ENCODE measurements at regions of chr16 and their contacts with region 1.

Region 1: GRCh38 chr16:15643048-15643945 is at the start of gene MARF1:
- DNase-seq: peak; percentile 99
- ATAC-seq: peak; percentile 74
- H3K4me3 Mint-ChIP-seq: peak within 1 kb of the TSS; percentile 94
- H3K27ac Mint-ChIP-seq: peak within 1 kb of the TSS; percentile 95
- H3K4me1 Mint-ChIP-seq: peaks cover 49% of the 10 kb centered on the region
- H3K27me3 Mint-ChIP-seq: peaks cover 4% of the 10 kb centered on the region
- total RNA-seq, gene MARF1: 62.7 to 64.5 TPM

Region 2: DNA sequence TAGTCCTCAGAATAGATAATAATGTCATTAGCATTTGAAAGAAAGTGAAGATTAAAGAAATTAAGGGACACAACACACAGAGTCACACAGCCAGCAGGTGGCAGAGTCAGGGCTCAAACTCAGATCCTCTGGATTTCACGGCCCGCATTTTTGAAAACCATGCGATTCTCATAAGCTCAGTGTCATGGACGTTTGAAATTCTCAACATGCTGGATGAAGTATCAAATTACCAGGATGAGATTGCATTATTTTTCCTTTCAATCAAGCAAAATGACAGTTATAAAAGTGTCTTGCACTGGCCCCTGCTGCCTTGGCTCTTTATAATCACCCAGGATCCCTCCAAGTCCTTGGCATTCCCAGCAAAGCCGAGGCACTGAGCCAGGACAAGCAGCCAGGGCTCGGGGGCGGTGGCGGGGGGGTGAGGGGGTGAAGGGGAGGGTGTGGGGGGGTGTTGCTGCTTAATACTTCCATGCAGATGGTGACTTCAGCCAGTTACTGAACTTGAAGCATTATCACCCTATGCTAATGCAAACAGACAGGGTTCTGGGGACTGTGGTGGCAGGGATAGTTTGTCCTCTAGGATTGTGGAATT is 215.6 kb before region 1 on chr16:
- CTCF ChIA-PET with region 1: interaction called, 13 read pairs
- POLR2A ChIA-PET with region 1: no interaction called
- DNase-seq: peak; percentile 65
- ATAC-seq: peak; percentile 57
- H3K4me3 Mint-ChIP-seq: no peak overlapping the region
- H3K27ac Mint-ChIP-seq: no peak overlapping the region
- H3K4me1 Mint-ChIP-seq: peaks cover 2% of the 10 kb centered on the region
- H3K27me3 Mint-ChIP-seq: peaks cover 6% of the 10 kb centered on the region

Region 3: GRCh38 chr16:15592324-15592723 is 51.0 kb before region 1 on chr16:
- CTCF ChIA-PET with region 1: interaction called, 5 read pairs
- POLR2A ChIA-PET with region 1: interaction called, 16 read pairs
- DNase-seq: no peak
- ATAC-seq: no peak
- H3K4me3 Mint-ChIP-seq: no peak overlapping the region
- H3K27ac Mint-ChIP-seq: peak overlapping the region; percentile 74
- H3K4me1 Mint-ChIP-seq: peaks cover 44% of the 10 kb centered on the region
- H3K27me3 Mint-ChIP-seq: no peaks in the 10 kb centered on the region

Region 4: DNA sequence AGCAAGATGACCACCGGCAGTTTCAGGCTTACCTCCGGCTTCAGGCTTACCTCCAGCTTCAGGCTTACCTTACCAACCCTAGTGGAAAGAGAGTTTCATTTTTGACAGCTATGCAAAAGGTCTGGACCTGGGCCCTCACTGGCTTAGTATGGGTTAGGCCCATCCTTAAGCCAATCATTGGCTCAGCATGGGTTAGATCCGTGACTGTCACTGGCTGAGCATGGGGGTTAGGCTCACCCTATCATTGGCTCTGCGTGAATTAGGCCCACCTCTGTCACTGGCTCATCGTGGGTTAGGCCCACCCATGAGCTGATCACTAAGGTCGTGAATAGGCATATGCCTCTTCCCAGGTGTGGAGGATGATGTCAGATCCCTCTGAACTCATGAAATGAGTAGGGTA is 14.9 kb after region 1 on chr16:
- CTCF ChIA-PET with region 1: interaction called, 17 read pairs
- POLR2A ChIA-PET with region 1: interaction called, 11 read pairs
- DNase-seq: no peak
- ATAC-seq: no peak
- H3K4me3 Mint-ChIP-seq: no peak overlapping the region
- H3K27ac Mint-ChIP-seq: peak overlapping the region; percentile 90
- H3K4me1 Mint-ChIP-seq: peaks cover 56% of the 10 kb centered on the region
- H3K27me3 Mint-ChIP-seq: no peaks in the 10 kb centered on the region

Region 5: GRCh38 chr16:15672514-15673167 is 29.3 kb after region 1 on chr16:
- CTCF ChIA-PET with region 1: interaction called, 27 read pairs
- POLR2A ChIA-PET with region 1: interaction called, 20 read pairs
- DNase-seq: peak; percentile 91
- ATAC-seq: peak; percentile 95
- H3K4me3 Mint-ChIP-seq: peak overlapping the region; percentile 71
- H3K27ac Mint-ChIP-seq: peak overlapping the region; percentile 97
- H3K4me1 Mint-ChIP-seq: peaks cover 57% of the 10 kb centered on the region
- H3K27me3 Mint-ChIP-seq: no peaks in the 10 kb centered on the region

Measured in activated CD8-positive, alpha-beta T cell treated with anti-CD3 and anti-CD28 coated beads, Interleukin-2, amount 10 ng/mL, durations not matched to agents 7 days and 5 days (primary cell).